PC-3 (cell line): ENCODE measurements at regions of chr2 and their contacts with region 1.

Region 1: DNA sequence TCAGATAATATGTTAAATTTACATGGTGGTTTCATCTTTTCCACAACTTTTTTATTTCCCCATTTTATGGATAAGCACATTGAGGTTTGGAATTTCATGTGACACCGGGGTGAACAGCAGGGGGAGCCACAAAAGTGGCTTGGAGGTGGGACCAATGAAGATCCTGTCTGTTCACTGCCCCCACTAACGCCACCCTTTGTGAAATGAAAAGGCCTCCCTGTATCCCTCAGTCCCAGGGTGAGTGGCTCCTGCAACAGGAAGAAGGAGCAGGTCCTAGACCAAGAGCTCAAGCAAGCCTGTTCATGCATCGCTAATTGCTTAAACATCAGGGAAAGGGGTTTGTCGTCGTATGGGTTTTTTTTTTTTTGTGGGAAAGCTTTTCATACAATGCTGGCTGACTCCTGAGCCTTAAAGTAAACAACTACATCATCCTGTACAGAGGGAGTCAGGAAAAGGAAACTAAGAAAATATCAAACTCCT is 267.8 kb upstream of the EPAS1 start:
- DNase-seq: peak; percentile 56
- ATAC-seq: peak; percentile 75
- H3K4me3 ChIP-seq: no peak overlapping the region
- H3K27ac ChIP-seq: 0 out of 2 replicates have a peak overlapping the region, but pooled peaks have one; percentile 7
- H3K4me1 ChIP-seq: peaks cover 28% of the 10 kb centered on the region
- H3K27me3 ChIP-seq: no peaks in the 10 kb centered on the region
- CTCF ChIP-seq: peak; percentile 63

Region 2: DNA sequence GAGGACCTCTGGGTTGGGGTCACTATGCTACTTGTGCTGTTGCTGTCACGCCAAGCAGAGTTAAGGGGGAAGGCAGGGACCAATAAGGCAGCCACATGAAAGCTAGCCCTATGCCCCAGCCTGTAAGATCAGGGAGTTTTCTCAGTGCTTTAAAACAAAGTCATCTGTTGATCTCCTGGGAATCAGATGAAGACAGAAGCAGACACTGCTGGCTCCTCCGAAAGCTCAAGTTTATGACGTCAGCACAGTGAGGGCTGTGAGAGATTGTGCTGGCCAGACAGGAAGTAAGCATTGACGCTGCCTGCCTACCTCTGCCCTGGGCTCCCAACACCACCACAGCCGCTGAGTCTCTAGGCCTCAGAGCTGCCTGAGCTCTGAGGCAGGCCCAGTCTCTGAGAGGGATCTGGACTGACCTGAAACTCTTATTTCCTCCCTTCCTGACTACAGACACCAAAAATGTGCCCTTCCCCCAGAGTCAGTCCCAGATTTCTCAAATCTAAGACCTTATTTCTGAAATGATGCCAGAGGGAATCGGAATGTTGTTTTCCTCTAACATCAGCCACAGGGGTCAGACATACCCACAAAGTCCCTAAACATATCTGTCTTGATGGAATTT is 149.8 kb after region 1 on chr2:
- CTCF ChIA-PET with region 1: no interaction called
- POLR2A ChIA-PET with region 1: no interaction called
- intact Hi-C with region 1: no loop called
- DNase-seq: peak; percentile 86
- ATAC-seq: peak; percentile 35; the same call in 1 of the 2 replicates
- H3K4me3 ChIP-seq: no peak overlapping the region
- H3K27ac ChIP-seq: peak overlapping the region; percentile 41
- H3K4me1 ChIP-seq: peaks cover 15% of the 10 kb centered on the region
- H3K27me3 ChIP-seq: no peaks in the 10 kb centered on the region
- CTCF ChIP-seq: no peak

Region 3: DNA sequence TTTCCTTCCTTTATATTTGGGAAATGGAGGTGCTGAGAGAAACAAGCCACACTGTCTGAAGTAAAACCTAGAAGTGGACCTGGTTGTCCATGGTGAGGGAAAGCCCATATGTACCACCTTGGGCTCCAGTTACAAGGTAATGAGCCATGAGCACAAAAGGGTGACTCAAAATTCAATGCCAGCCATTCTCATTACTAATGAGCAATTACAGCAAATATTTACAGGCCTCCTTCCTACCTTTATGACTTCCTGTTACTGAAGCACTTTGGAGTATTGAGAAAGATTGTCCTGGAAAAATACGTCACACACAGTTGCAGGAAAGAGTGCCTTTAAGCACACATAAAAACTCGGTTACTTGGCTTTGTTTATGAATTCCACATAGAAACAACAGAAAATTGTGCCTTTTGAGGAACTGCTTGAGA is 277.0 kb after region 1 on chr2:
- CTCF ChIA-PET with region 1: interaction called, 12 read pairs
- POLR2A ChIA-PET with region 1: no interaction called
- intact Hi-C with region 1: no loop called
- DNase-seq: peak; percentile 95
- ATAC-seq: peak; percentile 62
- H3K4me3 ChIP-seq: peak overlapping the region; percentile 41; the same call in 1 of the 2 replicates
- H3K27ac ChIP-seq: peak overlapping the region; percentile 93
- H3K4me1 ChIP-seq: peaks cover 78% of the 10 kb centered on the region
- H3K27me3 ChIP-seq: no peaks in the 10 kb centered on the region
- CTCF ChIP-seq: no peak